Activated CD4-positive, alpha-beta T cell treated with anti-CD3 and anti-CD28 coated beads for 36 hours (primary cell): ENCODE measurements at regions of chr22 and their contacts with region 1.

Region 1: GRCh38 chr22:20803696-20804324 is 29.9 kb downstream of the SERPIND1 start:
- DNase-seq: peak; percentile 72
- ATAC-seq: peak; percentile 53
- H3K4me3 Mint-ChIP-seq: no peak overlapping the region
- H3K27ac Mint-ChIP-seq: no peak overlapping the region
- H3K4me1 Mint-ChIP-seq: peaks cover 6% of the 10 kb centered on the region
- H3K27me3 Mint-ChIP-seq: no peaks in the 10 kb centered on the region

Region 2: GRCh38 chr22:20783844-20784723 is 19.7 kb before region 1 on chr22:
- CTCF ChIA-PET with region 1: interaction called, 12 read pairs
- POLR2A ChIA-PET with region 1: no interaction called
- intact Hi-C with region 1: no loop called
- DNase-seq: peak; percentile 66
- ATAC-seq: no peak
- H3K4me3 Mint-ChIP-seq: no peak overlapping the region
- H3K27ac Mint-ChIP-seq: no peak overlapping the region
- H3K4me1 Mint-ChIP-seq: peaks cover 13% of the 10 kb centered on the region
- H3K27me3 Mint-ChIP-seq: no peaks in the 10 kb centered on the region

Region 3: GRCh38 chr22:20844055-20845037 is 40.5 kb after region 1 on chr22:
- CTCF ChIA-PET with region 1: no interaction called
- POLR2A ChIA-PET with region 1: no interaction called
- intact Hi-C with region 1: loop called in 1 of 2 experiments (anchors 5 kb)
- DNase-seq: no peak
- ATAC-seq: no peak
- H3K4me3 Mint-ChIP-seq: no peak overlapping the region
- H3K27ac Mint-ChIP-seq: no peak overlapping the region
- H3K4me1 Mint-ChIP-seq: peaks cover 47% of the 10 kb centered on the region
- H3K27me3 Mint-ChIP-seq: no peaks in the 10 kb centered on the region

Region 4: DNA sequence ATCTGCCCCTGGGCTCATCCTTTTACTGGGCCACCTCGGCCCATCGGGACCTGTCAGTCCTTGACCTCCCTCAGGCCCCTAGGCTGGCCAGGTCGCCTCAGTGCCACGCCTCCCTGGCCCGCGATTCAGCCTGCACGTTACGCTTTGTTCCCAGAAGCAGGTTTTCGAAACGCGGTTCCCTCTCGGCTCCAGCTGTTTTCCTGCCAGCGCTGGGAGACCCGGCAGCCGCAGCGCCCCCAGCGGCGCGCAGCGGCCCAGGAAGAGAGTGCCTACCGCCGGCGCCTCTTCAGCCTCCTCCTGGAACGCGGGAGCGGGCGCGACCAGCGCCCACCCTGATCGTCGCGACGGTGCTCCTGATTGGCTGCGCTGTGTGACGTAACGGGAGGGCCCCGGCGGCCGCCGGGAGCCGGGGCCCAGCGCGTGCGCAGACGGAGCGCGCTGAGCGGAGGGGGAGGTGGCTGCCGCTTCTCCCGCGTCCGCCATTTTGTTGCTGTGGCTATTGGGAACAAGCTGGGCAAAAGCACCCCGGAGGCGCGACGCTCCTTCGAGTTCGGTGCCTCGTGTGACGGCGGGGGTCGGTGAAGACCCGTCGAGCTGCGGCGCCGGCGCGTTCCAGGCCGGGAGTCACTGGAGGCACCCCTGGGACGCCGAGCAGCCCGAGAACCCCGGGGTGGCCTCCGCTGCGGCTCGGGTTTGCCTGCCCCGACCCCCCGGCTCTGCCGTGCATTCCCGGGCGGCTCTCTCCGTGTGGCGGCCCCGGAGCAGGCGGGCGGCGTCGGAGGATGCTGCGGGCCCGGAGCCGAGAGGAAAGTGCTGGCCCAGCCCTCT is 113.4 kb after region 1 on chr22 and contains the start of gene CRKL:
- CTCF ChIA-PET with region 1: no interaction called
- POLR2A ChIA-PET with region 1: no interaction called
- intact Hi-C with region 1: no loop called
- DNase-seq: peak; percentile 98
- ATAC-seq: peak; percentile 98
- H3K4me3 Mint-ChIP-seq: peak within 1 kb of the TSS; percentile 99
- H3K27ac Mint-ChIP-seq: peak within 1 kb of the TSS; percentile 93
- H3K4me1 Mint-ChIP-seq: peaks cover 27% of the 10 kb centered on the region
- H3K27me3 Mint-ChIP-seq: no peaks in the 10 kb centered on the region
- total RNA-seq, gene CRKL: 80.8 to 92.0 TPM

Region 5: GRCh38 chr22:20946080-20946986 is 142.5 kb after region 1 on chr22:
- CTCF ChIA-PET with region 1: no interaction called
- POLR2A ChIA-PET with region 1: no interaction called
- intact Hi-C with region 1: no loop called
- DNase-seq: no peak
- ATAC-seq: no peak
- H3K4me3 Mint-ChIP-seq: no peak overlapping the region
- H3K27ac Mint-ChIP-seq: peak overlapping the region; percentile 8
- H3K4me1 Mint-ChIP-seq: peaks cover 50% of the 10 kb centered on the region
- H3K27me3 Mint-ChIP-seq: no peaks in the 10 kb centered on the region

Region 6: GRCh38 chr22:21082248-21082647 is 278.4 kb after region 1 on chr22:
- CTCF ChIA-PET with region 1: no interaction called
- POLR2A ChIA-PET with region 1: no interaction called
- intact Hi-C with region 1: loop called in 1 of 2 experiments (anchors 10 kb)
- DNase-seq: no peak
- ATAC-seq: no peak
- H3K4me3 Mint-ChIP-seq: no peak overlapping the region
- H3K27ac Mint-ChIP-seq: no peak overlapping the region
- H3K4me1 Mint-ChIP-seq: no peaks in the 10 kb centered on the region
- H3K27me3 Mint-ChIP-seq: no peaks in the 10 kb centered on the region